ENCODE measurements at regions of chr18 and their contacts with region 1.

Region 1: DNA sequence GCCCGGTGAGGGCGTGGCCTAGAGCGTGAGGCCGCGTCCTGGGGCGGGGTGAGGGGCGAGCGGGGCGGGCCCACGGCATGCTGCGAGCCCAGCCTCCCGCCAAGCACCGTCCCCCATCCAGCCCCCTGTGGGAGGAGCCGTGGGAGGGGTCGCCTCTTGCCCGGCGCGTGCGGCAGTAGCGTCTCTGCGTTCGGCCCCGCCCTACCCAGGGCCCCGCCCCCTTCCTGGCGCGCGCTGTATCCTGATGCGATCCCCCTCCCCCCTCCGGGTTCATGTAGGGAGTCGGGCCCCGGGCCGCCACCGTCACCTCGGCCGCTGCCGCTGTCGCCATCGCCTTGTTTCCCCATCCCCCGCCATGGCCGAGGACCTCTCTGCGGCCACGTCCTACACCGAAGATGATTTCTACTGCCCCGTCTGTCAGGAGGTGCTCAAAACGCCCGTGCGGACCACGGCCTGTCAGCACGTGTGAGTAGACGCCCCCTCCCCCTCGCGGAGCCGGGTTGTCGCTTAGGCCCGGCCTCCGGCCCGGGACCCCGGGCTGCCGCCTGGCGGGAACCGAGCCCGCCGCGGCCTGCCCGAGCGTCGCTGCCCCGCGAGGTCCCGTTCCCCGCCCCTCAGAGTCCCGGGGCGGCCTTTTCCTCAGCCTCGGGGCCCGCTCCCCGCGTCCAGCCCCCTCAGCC is 888 bp downstream of the RNF138 start:
- DNase-seq: peak; percentile 99 to 100 (median 100)
- ATAC-seq: peak; percentile 87
- H3K4me3 ChIP-seq: peak overlapping the region; percentile 92
- H3K4me3 Mint-ChIP-seq: peak overlapping the region; percentile 100
- H3K27ac ChIP-seq: peak overlapping the region; percentile 98 to 100
- H3K27ac Mint-ChIP-seq: peak overlapping the region; percentile 85
- H3K4me1 ChIP-seq: peaks cover 43% of the 10 kb centered on the region
- H3K4me1 Mint-ChIP-seq: peaks cover 52% of the 10 kb centered on the region
- H3K27me3 ChIP-seq: no peaks in the 10 kb centered on the region
- H3K27me3 Mint-ChIP-seq: no peaks in the 10 kb centered on the region
- CTCF ChIP-seq: no peak

Region 2: DNA sequence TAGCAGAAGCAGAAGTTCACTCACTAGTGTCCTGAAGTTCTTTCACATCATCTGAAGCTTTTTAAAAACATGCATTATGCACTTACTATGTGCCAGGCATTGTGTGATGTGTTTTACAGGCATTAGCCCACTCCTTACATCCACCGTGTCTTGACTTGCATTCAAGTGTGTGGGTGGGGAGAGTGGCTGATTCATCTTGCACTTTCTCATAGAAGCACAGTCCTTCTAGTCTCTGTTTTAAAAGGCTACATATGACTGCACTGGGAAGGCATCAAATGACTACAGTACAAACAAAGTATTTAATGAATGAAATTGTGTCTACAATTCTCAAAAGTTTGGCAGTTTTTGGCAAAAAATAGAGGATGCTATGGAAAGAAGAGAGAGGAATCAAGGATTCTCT is 1028.4 kb before region 1 on chr18:
- CTCF ChIA-PET with region 1: no interaction called
- POLR2A ChIA-PET with region 1: no interaction called
- intact Hi-C with region 1: no loop called
- DNase-seq: no peak
- ATAC-seq: no peak
- H3K4me3 ChIP-seq: no peak overlapping the region
- H3K4me3 Mint-ChIP-seq: no peak overlapping the region
- H3K27ac ChIP-seq: no peak overlapping the region
- H3K27ac Mint-ChIP-seq: no peak overlapping the region
- H3K4me1 ChIP-seq: no peaks in the 10 kb centered on the region
- H3K4me1 Mint-ChIP-seq: no peaks in the 10 kb centered on the region
- H3K27me3 ChIP-seq: no peaks in the 10 kb centered on the region
- H3K27me3 Mint-ChIP-seq: no peaks in the 10 kb centered on the region
- CTCF ChIP-seq: no peak

Region 3: DNA sequence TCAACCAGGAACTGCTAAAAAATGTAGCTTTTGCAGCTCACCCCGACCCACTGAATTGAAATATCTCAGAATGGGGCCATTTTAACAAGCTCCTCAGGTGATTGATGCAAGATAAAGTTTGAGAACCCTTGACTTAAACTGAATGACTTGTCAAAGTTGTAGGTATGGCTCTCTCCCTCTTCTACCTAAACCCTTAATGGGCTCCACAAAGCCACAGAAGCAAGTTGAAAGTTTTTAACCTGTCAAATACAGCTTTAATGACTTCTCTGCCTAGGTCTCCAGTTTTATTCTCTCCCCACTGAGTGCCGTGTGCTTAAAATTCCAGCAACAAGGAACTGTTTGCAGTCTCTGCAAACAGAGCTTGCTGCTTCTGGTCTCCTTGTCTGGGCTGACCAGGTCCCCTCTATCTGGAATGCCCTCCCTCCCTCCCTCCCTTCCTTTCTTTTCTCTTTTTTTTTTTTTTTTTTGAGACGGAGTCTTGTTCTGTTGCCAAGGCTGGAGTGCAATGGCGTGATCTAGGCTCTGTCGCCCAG is 93.6 kb before region 1 on chr18:
- CTCF ChIA-PET with region 1: no interaction called
- POLR2A ChIA-PET with region 1: no interaction called
- intact Hi-C with region 1: no loop called
- DNase-seq: no peak
- ATAC-seq: no peak
- H3K4me3 ChIP-seq: no peak overlapping the region
- H3K4me3 Mint-ChIP-seq: no peak overlapping the region
- H3K27ac ChIP-seq: no peak overlapping the region
- H3K27ac Mint-ChIP-seq: no peak overlapping the region
- H3K4me1 ChIP-seq: no peaks in the 10 kb centered on the region
- H3K4me1 Mint-ChIP-seq: no peaks in the 10 kb centered on the region
- H3K27me3 ChIP-seq: no peaks in the 10 kb centered on the region
- H3K27me3 Mint-ChIP-seq: no peaks in the 10 kb centered on the region
- CTCF ChIP-seq: no peak

Region 4: GRCh38 chr18:32040936-32041335 is 51.6 kb before region 1 on chr18:
- CTCF ChIA-PET with region 1: no interaction called
- POLR2A ChIA-PET with region 1: interaction called, 12 read pairs
- intact Hi-C with region 1: loop called in 1 of 2 experiments (anchors 5 kb)
- DNase-seq: peak in 11 of 14 experiments; percentile 12 to 84 (median 32)
- ATAC-seq: peak; percentile 71
- H3K4me3 ChIP-seq: peak overlapping the region; percentile 2
- H3K4me3 Mint-ChIP-seq: peak overlapping the region; percentile 77
- H3K27ac ChIP-seq: peak overlapping the region in 1 of 2 donors; percentile 8
- H3K27ac Mint-ChIP-seq: peak overlapping the region; percentile 74
- H3K4me1 ChIP-seq: peaks cover 38% of the 10 kb centered on the region
- H3K4me1 Mint-ChIP-seq: peaks cover 62% of the 10 kb centered on the region
- H3K27me3 ChIP-seq: no peaks in the 10 kb centered on the region
- H3K27me3 Mint-ChIP-seq: no peaks in the 10 kb centered on the region
- CTCF ChIP-seq: no peak

Region 5: GRCh38 chr18:32048507-32049091 is 44.0 kb before region 1 on chr18:
- CTCF ChIA-PET with region 1: interaction called, 4 read pairs
- POLR2A ChIA-PET with region 1: interaction called, 5 read pairs
- intact Hi-C with region 1: loop called in 1 of 2 experiments (anchors 5 kb)
- DNase-seq: peak in 2 of 14 experiments; percentile 41 to 49
- ATAC-seq: peak; percentile 27
- H3K4me3 ChIP-seq: no peak overlapping the region
- H3K4me3 Mint-ChIP-seq: peak overlapping the region; percentile 11
- H3K27ac ChIP-seq: peak overlapping the region in 1 of 2 donors; percentile 56
- H3K27ac Mint-ChIP-seq: peak overlapping the region; percentile 75
- H3K4me1 ChIP-seq: peaks cover 39% of the 10 kb centered on the region
- H3K4me1 Mint-ChIP-seq: peaks cover 50% of the 10 kb centered on the region
- H3K27me3 ChIP-seq: no peaks in the 10 kb centered on the region
- H3K27me3 Mint-ChIP-seq: no peaks in the 10 kb centered on the region
- CTCF ChIP-seq: no peak

Region 6: DNA sequence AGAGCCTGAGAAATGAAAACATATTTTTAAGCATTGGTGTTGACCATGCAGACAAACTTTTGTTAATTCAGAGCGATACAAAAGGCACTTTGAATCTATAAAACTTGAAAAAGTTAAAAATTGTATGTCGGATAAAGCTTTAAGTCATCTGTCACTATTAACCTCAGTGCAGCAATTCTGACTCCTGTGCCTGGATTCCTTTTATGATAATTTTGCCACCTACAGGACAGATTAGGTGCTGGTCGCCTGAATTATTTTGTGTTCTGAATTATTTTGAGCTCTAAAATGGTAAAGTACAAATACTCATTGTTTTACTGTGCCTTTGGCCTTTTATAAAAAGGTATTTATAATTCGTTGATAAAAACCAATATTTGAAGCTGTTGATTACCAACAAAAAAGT is 20.2 kb before region 1 on chr18:
- CTCF ChIA-PET with region 1: interaction called, 11 read pairs
- POLR2A ChIA-PET with region 1: interaction called, 13 read pairs
- intact Hi-C with region 1: loop called in 1 of 2 experiments (anchors 2 kb)
- DNase-seq: peak in 5 of 14 experiments; percentile 4 to 61 (median 61)
- ATAC-seq: peak; percentile 80
- H3K4me3 ChIP-seq: no peak overlapping the region
- H3K4me3 Mint-ChIP-seq: no peak overlapping the region
- H3K27ac ChIP-seq: no peak overlapping the region
- H3K27ac Mint-ChIP-seq: peak overlapping the region; percentile 35
- H3K4me1 ChIP-seq: no peaks in the 10 kb centered on the region
- H3K4me1 Mint-ChIP-seq: peaks cover 23% of the 10 kb centered on the region
- H3K27me3 ChIP-seq: no peaks in the 10 kb centered on the region
- H3K27me3 Mint-ChIP-seq: no peaks in the 10 kb centered on the region
- CTCF ChIP-seq: peak; percentile 66

Region 7: DNA sequence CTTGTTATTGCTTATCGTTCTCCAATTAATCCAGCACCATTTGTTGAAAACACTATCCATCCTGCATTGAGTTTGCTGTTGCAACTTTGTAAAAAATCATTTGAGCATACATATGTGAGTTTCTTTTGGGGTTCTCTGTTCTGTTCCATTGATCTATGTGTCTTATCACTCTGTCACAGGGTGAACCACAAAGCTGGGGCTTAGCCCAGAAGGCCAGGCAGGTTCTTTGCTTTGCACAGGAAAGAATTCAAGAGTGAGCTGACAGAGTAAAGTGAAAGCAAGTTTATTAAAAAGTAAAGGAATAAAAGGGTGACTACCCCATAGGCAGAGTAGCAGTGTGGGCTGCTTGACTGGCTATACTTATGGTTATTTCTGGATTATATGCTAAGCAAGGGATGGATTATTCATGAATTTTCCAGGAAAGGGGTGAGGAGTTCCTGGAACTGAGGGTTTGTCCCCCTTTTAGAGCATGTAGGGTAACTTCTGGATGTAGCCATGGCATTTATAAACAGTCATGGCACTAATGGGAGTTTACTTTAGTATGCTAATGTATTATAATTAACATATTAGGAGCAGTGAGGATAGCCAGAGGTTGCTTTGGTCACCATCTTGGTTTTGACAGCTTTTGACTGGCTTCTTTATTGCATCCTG is 45.9 kb after region 1 on chr18:
- CTCF ChIA-PET with region 1: no interaction called
- POLR2A ChIA-PET with region 1: no interaction called
- intact Hi-C with region 1: loop called (anchors 5 kb)
- DNase-seq: peak in 2 of 14 experiments; percentile 19 to 30
- ATAC-seq: peak; percentile 68
- H3K4me3 ChIP-seq: no peak overlapping the region
- H3K4me3 Mint-ChIP-seq: no peak overlapping the region
- H3K27ac ChIP-seq: no peak overlapping the region
- H3K27ac Mint-ChIP-seq: peak overlapping the region; percentile 20
- H3K4me1 ChIP-seq: no peaks in the 10 kb centered on the region
- H3K4me1 Mint-ChIP-seq: peaks cover 18% of the 10 kb centered on the region
- H3K27me3 ChIP-seq: no peaks in the 10 kb centered on the region
- H3K27me3 Mint-ChIP-seq: no peaks in the 10 kb centered on the region
- CTCF ChIP-seq: no peak

Measured in CD4-positive, alpha-beta T cell (primary cell).